Activated CD4-positive, alpha-beta memory T cell treated with anti-CD3 and anti-CD28 coated beads, Interleukin-2, amount 10 ng/mL, durations not matched to agents 7 days and 5 days (primary cell): ENCODE measurements at regions of chr22 and their contacts with region 1.

Region 1: GRCh38 chr22:36239401-36240171 is at the start of gene APOL2:
- DNase-seq: peak; percentile 90
- H3K4me3 Mint-ChIP-seq: peak within 1 kb of the TSS; percentile 95
- H3K27ac Mint-ChIP-seq: peak within 1 kb of the TSS; percentile 91
- H3K4me1 Mint-ChIP-seq: peaks cover 45% of the 10 kb centered on the region
- H3K27me3 Mint-ChIP-seq: peaks cover 3% of the 10 kb centered on the region
- total RNA-seq, gene APOL2: 82.3 to 83.0 TPM

Region 2: GRCh38 chr22:36156515-36157419 is 82.8 kb before region 1 on chr22:
- CTCF ChIA-PET with region 1: interaction called, 9 read pairs
- POLR2A ChIA-PET with region 1: interaction called, 15 read pairs
- DNase-seq: peak; percentile 70
- H3K4me3 Mint-ChIP-seq: peak overlapping the region; percentile 95
- H3K27ac Mint-ChIP-seq: peak overlapping the region; percentile 91
- H3K4me1 Mint-ChIP-seq: peaks cover 87% of the 10 kb centered on the region
- H3K27me3 Mint-ChIP-seq: no peaks in the 10 kb centered on the region

Region 3: DNA sequence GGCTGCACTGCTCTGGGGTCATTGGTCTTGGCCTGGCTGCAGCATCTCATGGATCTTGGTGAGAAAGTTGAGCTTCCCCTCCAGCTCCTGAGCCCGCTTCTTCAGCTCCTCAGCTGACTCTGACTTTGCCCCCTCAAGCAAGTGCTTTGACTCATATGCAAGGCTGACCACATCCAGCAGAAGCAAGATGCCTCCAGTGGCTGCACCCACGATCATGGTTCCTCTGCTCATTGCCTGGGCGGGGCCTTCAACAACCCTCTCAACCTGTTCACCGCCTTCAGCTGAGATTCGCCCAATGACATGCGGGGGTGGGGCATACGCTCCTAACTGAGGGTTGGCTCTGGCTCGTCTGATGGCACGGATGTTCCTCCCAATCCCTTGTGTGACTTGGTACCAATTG is 12.2 kb before region 1 on chr22:
- CTCF ChIA-PET with region 1: interaction called, 5 read pairs
- POLR2A ChIA-PET with region 1: interaction called, 20 read pairs
- DNase-seq: peak; percentile 26
- H3K4me3 Mint-ChIP-seq: no peak overlapping the region
- H3K27ac Mint-ChIP-seq: no peak overlapping the region
- H3K4me1 Mint-ChIP-seq: peaks cover 15% of the 10 kb centered on the region
- H3K27me3 Mint-ChIP-seq: no peaks in the 10 kb centered on the region

Region 4: DNA sequence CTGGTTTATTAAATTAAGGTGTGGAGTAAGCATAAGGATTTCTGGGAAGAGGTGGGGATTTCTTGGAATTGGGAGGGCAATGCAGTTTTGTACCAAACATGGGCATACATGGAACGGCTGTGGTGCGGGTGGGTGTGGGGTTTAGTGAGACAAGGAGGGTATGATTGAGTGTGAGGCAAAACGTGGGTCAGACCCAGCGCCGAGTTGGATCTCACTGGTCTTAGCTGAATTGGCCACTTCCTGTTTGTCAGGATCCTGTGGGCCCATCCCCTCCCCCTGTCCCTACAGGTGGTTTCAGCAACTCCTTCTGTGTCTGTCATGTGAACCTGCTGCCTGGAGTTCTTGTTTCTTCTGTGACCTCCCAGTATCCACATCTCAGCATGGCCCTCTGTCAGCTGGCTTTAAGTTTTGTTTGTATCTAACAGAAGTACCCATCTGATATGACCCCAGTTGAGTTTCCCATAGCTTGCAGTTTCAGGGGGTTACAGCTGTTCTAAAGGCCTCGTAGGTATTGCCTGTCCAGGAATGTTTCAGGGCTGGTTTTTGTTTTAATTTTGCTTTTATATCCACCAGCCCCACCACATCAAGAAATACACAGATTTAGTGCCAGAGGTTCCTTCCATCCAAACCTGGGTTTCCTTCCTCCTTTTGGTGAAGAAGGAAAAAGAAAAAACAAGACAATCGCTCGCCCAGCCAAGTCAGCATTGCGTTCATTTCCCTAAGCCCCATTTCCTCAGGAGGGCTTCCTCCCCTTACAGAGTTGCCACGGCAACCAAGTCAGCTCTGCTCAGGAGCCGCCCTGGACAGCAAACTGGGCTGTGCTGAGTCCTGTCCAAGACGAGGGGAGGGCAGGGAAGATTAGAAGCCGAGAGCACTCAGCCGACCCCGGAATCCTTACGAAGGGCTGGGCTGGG is 19.4 kb after region 1 on chr22:
- CTCF ChIA-PET with region 1: interaction called, 65 read pairs
- POLR2A ChIA-PET with region 1: interaction called, 48 read pairs
- DNase-seq: peak; percentile 65
- H3K4me3 Mint-ChIP-seq: peak overlapping the region; percentile 43
- H3K27ac Mint-ChIP-seq: peak overlapping the region; percentile 88
- H3K4me1 Mint-ChIP-seq: peaks cover 65% of the 10 kb centered on the region
- H3K27me3 Mint-ChIP-seq: no peaks in the 10 kb centered on the region

Region 5: GRCh38 chr22:36398621-36399469 is 159.3 kb after region 1 on chr22:
- CTCF ChIA-PET with region 1: no interaction called
- POLR2A ChIA-PET with region 1: no interaction called
- DNase-seq: no peak
- H3K4me3 Mint-ChIP-seq: no peak overlapping the region
- H3K27ac Mint-ChIP-seq: peak overlapping the region; percentile 67
- H3K4me1 Mint-ChIP-seq: peaks cover 46% of the 10 kb centered on the region
- H3K27me3 Mint-ChIP-seq: no peaks in the 10 kb centered on the region

Region 6: GRCh38 chr22:36486619-36487384 is 247.2 kb after region 1 on chr22:
- CTCF ChIA-PET with region 1: interaction called, 17 read pairs
- POLR2A ChIA-PET with region 1: interaction called, 9 read pairs
- DNase-seq: peak; percentile 66
- H3K4me3 Mint-ChIP-seq: no peak overlapping the region
- H3K27ac Mint-ChIP-seq: no peak overlapping the region
- H3K4me1 Mint-ChIP-seq: peaks cover 7% of the 10 kb centered on the region
- H3K27me3 Mint-ChIP-seq: no peaks in the 10 kb centered on the region